ENCODE measurements at regions of chr1 and their contacts with region 1.

Region 1: DNA sequence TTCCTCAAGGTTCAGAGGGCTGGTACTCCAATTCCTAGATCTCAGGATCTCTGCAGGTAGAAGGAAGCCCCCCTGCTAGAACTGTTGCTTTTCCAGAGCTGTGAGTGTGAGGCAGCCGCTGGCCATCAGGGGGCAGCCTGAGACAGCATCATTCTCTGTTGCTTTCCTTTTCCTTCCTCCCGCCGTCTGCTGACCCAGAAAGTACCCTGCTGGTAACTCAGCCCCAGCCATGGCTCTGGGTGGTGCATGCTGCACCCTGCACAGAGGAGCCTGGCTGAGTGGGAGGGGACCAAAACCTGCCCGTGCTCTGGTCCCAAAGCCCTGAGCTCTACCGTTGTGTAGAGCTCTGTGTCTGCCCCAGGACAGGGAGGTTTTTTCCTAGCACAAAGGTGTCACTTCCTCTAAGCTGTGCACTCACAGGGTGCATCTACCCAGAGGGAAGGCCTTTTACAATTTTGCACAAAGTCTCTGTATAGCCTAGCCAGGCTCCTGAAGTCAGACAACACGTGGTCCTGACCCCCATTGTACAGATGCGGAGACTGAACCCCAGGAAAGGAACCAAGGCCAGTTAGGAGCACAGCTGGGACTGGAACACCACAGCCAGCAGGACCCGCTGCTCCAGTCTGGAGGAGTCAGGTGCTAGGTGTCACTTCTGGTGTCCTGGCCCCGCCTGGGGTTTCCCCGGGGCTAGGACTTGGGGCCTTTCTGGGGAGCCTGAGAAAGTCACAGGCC is 5.6 kb upstream of the FAM131C start:
- DNase-seq: peak; percentile 63
- ATAC-seq: peak; percentile 86
- H3K4me3 Mint-ChIP-seq: peak overlapping the region; percentile 75
- H3K27ac Mint-ChIP-seq: no peak overlapping the region
- H3K4me1 Mint-ChIP-seq: peaks cover 9% of the 10 kb centered on the region
- H3K27me3 Mint-ChIP-seq: peaks cover 6% of the 10 kb centered on the region
- CTCF ChIP-seq: peak; percentile 27

Region 2: GRCh38 chr1:15825800-15826199 is 253.3 kb before region 1 on chr1:
- CTCF ChIA-PET with region 1: no interaction called
- POLR2A ChIA-PET with region 1: no interaction called
- intact Hi-C with region 1: no loop called
- DNase-seq: no peak
- ATAC-seq: no peak
- H3K4me3 Mint-ChIP-seq: no peak overlapping the region
- H3K27ac Mint-ChIP-seq: peak overlapping the region; percentile 54
- H3K4me1 Mint-ChIP-seq: peaks cover 42% of the 10 kb centered on the region
- H3K27me3 Mint-ChIP-seq: no peaks in the 10 kb centered on the region
- CTCF ChIP-seq: no peak

Region 3: DNA sequence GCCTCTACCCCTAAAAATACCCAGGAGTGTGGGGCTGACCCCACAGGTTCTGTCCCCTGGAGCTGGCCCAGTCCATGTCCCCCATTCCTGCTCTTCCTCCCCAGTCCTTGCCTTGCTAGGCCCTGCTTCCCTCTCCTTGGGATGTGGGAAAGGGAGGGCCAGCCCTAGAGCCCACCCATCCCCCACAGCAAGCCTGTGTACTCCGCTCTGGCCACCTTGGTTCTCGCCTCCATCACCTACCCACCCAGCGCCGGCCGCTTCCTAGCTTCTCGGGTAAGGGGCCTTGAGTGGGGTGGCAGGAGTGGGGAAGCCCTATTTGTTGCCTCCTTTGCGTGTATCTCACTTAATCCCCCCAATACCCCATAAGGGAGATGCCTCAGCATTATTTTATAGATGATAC is 28.8 kb before region 1 on chr1:
- CTCF ChIA-PET with region 1: no interaction called
- POLR2A ChIA-PET with region 1: no interaction called
- intact Hi-C with region 1: no loop called
- DNase-seq: no peak
- ATAC-seq: no peak
- H3K4me3 Mint-ChIP-seq: no peak overlapping the region
- H3K27ac Mint-ChIP-seq: no peak overlapping the region
- H3K4me1 Mint-ChIP-seq: peaks cover 3% of the 10 kb centered on the region
- H3K27me3 Mint-ChIP-seq: peaks cover 20% of the 10 kb centered on the region
- CTCF ChIP-seq: no peak

Region 4: DNA sequence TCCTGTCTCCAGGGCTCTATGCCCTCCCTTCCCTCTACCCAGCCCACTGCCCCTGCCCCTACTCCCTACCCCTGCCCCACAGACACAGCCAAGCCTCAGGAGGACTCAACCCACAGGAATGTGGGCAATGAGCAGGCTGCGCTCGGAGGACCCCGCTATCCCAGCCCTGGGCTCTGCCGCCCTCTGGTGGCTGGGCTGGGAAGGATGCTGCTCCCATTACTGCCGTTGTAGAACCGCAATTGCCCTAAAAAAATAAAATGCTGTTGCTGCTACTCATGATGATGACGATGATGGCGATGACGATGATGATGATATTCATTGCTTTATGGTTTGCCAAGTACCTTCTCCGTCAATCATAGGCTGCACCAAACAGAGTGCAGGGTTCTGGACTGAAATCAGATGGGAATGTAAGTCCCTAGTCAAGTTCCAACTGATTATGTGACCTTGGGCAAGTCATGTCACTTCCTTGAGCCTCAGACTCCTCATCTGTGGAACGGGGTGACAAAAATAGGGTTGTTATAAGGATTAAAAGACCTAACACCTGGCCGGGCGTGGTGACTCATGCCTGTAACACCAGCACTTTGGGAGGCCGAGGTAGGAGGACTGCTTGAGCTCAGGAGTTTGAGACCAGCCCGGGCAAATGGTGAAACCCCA is 108.8 kb after region 1 on chr1:
- CTCF ChIA-PET with region 1: interaction called, 126 read pairs
- POLR2A ChIA-PET with region 1: interaction called, 4 read pairs
- intact Hi-C with region 1: loop called (anchors 1 kb)
- DNase-seq: peak; percentile 69
- ATAC-seq: peak; percentile 89
- H3K4me3 Mint-ChIP-seq: no peak overlapping the region
- H3K27ac Mint-ChIP-seq: no peak overlapping the region
- H3K4me1 Mint-ChIP-seq: no peaks in the 10 kb centered on the region
- H3K27me3 Mint-ChIP-seq: peaks cover 19% of the 10 kb centered on the region
- CTCF ChIP-seq: peak; percentile 44

Region 5: DNA sequence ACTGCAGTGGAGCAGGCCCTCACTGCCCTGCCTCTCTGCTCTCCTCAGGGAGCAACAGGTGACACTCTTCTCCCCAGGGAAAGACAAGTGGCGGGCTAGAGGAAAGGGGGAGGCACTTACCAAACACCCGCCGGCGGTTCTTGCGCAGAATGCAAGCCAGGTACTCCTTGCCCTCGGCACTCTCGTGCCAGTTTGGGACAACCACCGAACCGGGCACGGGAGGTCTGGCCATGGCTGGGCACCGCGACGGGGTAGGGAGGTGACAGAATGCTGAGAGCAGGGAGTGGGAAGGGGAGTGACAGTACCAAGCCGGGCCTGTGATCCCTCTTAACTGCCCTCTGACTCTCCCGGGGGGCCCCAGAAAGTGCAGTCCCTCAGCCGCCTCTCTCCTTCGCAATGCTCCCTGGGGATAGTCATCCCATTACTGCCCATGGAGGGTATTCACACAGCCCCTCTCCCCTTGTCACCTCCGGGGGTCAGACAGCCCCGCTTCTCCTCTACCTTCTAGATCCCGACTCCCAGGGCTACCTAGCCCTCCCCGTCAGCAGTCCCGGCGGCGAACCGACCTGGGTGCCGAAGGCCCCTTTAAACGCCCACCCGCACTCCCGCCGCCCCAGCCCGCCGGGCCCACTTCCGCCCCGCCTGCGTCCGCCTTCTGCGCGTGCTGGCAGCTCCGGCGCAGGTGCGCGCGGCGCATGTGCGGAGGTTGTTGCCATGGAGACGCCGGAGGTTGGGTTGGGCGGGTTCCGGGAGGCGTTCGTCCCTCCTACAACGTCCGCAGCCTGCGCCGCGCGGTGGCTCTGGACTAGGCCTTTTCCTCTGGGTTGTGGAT is 157.6 kb after region 1 on chr1 and contains the start of gene CPLANE2:
- CTCF ChIA-PET with region 1: interaction called, 3 read pairs
- POLR2A ChIA-PET with region 1: no interaction called
- intact Hi-C with region 1: loop called (anchors 2 kb)
- DNase-seq: peak; percentile 97
- ATAC-seq: peak; percentile 82
- H3K4me3 Mint-ChIP-seq: peak within 1 kb of the TSS; percentile 90
- H3K27ac Mint-ChIP-seq: peak within 1 kb of the TSS; percentile 95
- H3K4me1 Mint-ChIP-seq: peaks cover 12% of the 10 kb centered on the region
- H3K27me3 Mint-ChIP-seq: no peaks in the 10 kb centered on the region
- CTCF ChIP-seq: no peak
- total RNA-seq, gene CPLANE2: 5.0 and 5.1 TPM in 2 replicates

Region 6: GRCh38 chr1:16243936-16244649 is 165.0 kb after region 1 on chr1:
- CTCF ChIA-PET with region 1: interaction called, 55 read pairs
- POLR2A ChIA-PET with region 1: interaction called, 3 read pairs
- intact Hi-C with region 1: loop called (anchors 1 kb)
- DNase-seq: peak; percentile 59
- ATAC-seq: peak; percentile 92
- H3K4me3 Mint-ChIP-seq: no peak overlapping the region
- H3K27ac Mint-ChIP-seq: no peak overlapping the region
- H3K4me1 Mint-ChIP-seq: peaks cover 14% of the 10 kb centered on the region
- H3K27me3 Mint-ChIP-seq: no peaks in the 10 kb centered on the region
- CTCF ChIP-seq: no peak

Region 7: GRCh38 chr1:16409536-16410152 is 330.6 kb after region 1 on chr1:
- CTCF ChIA-PET with region 1: no interaction called
- POLR2A ChIA-PET with region 1: no interaction called
- intact Hi-C with region 1: no loop called
- DNase-seq: no peak
- ATAC-seq: no peak
- H3K4me3 Mint-ChIP-seq: no peak overlapping the region
- H3K27ac Mint-ChIP-seq: no peak overlapping the region
- H3K4me1 Mint-ChIP-seq: peaks cover 5% of the 10 kb centered on the region
- H3K27me3 Mint-ChIP-seq: no peaks in the 10 kb centered on the region
- CTCF ChIP-seq: no peak

Measured in activated B cell treated with CpG ODN at 0.5 μM for 24 hours (primary cell).